ENCODE measurements at regions of chr1 and their contacts with region 1.

Region 1: GRCh38 chr1:154520333-154520732 is 18.1 kb upstream of the SHE start:
- DNase-seq: no peak
- H3K4me3 ChIP-seq: no peak overlapping the region
- H3K4me3 Mint-ChIP-seq: no peak overlapping the region
- H3K27ac ChIP-seq: no peak overlapping the region
- H3K27ac Mint-ChIP-seq: peak overlapping the region in 2 of 8 donors; percentile 17 to 52
- H3K4me1 ChIP-seq: no peaks in the 10 kb centered on the region
- H3K4me1 Mint-ChIP-seq: no peaks in the 10 kb centered on the region
- H3K27me3 ChIP-seq: peaks cover 7% of the 10 kb centered on the region
- H3K27me3 Mint-ChIP-seq: peaks cover 12 to 45% of the 10 kb centered on the region in 2 donors

Region 2: GRCh38 chr1:154775621-154776605 is 255.6 kb after region 1 on chr1:
- CTCF ChIA-PET with region 1: no interaction called
- POLR2A ChIA-PET with region 1: interaction called, 12 read pairs
- DNase-seq: no peak
- H3K4me3 ChIP-seq: no peak overlapping the region
- H3K4me3 Mint-ChIP-seq: no peak overlapping the region
- H3K27ac ChIP-seq: no peak overlapping the region
- H3K27ac Mint-ChIP-seq: no peak overlapping the region
- H3K4me1 ChIP-seq: no peaks in the 10 kb centered on the region
- H3K4me1 Mint-ChIP-seq: no peaks in the 10 kb centered on the region
- H3K27me3 ChIP-seq: no peaks in the 10 kb centered on the region
- H3K27me3 Mint-ChIP-seq: peaks cover 0 to 4% of the 10 kb centered on the region in 2 donors

Measured in CD8-positive, alpha-beta memory T cell (primary cell).